ENCODE measurements at regions of chr11 and their contacts with region 1.

Region 1: GRCh38 chr11:86369668-86370067 is 5.0 kb upstream of the CCDC81 start:
- DNase-seq: no peak
- CTCF ChIP-seq: no peak

Region 2: DNA sequence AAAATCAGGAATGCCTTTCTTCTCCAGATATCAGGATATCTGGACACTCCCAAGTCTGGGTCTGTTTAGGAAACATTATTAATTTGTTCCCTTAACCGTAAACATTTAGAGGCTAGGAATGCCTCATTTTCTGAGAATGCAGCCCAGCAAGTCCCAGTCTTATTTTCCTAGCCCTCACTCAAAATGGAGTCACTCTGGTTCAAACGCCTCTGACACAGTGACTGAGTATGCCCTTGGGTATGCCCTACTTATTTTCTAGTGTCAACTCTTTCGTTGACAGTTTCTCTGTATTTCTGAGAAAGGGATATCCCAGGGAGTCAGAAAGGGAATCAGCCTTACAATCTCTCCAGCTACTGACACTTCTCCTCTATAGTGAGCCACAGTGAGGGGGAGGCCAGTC is 11.0 kb before region 1 on chr11:
- CTCF ChIA-PET with region 1: interaction called, 11 read pairs
- POLR2A ChIA-PET with region 1: no interaction called
- DNase-seq: no peak
- CTCF ChIP-seq: no peak

Region 3: GRCh38 chr11:86571273-86571948 is 201.7 kb after region 1 on chr11:
- CTCF ChIA-PET with region 1: no interaction called
- POLR2A ChIA-PET with region 1: no interaction called
- DNase-seq: no peak
- CTCF ChIP-seq: no peak